CD4-positive, alpha-beta memory T cell (primary cell): ENCODE measurements at regions of chr11 and their contacts with region 1.

Region 1: GRCh38 chr11:48055292-48056132 is 75.2 kb downstream of the PTPRJ start:
- DNase-seq: peak; percentile 77 to 84 (median 81)
- H3K4me3 ChIP-seq: peak overlapping the region; percentile 33 to 40
- H3K4me3 Mint-ChIP-seq: peak overlapping the region; percentile 71 to 88 (median 83)
- H3K27ac ChIP-seq: peak overlapping the region; percentile 31
- H3K27ac Mint-ChIP-seq: peak overlapping the region; percentile 79 to 96 (median 91)
- H3K4me1 ChIP-seq: peaks cover 89% of the 10 kb centered on the region
- H3K4me1 Mint-ChIP-seq: peaks cover 60 to 93% (median 75%) of the 10 kb centered on the region in 4 donors
- H3K27me3 ChIP-seq: no peaks in the 10 kb centered on the region
- H3K27me3 Mint-ChIP-seq: no peaks in the 10 kb centered on the region

Region 2: GRCh38 chr11:47750725-47751124 is 304.8 kb before region 1 on chr11:
- CTCF ChIA-PET with region 1: no interaction called
- POLR2A ChIA-PET with region 1: no interaction called
- intact Hi-C with region 1: no loop called
- DNase-seq: no peak
- H3K4me3 ChIP-seq: no peak overlapping the region
- H3K4me3 Mint-ChIP-seq: no peak overlapping the region
- H3K27ac ChIP-seq: no peak overlapping the region
- H3K27ac Mint-ChIP-seq: peak overlapping the region in 1 of 7 donors; percentile 32
- H3K4me1 ChIP-seq: no peaks in the 10 kb centered on the region
- H3K4me1 Mint-ChIP-seq: peaks cover 6 to 17% (median 11%) of the 10 kb centered on the region in 4 donors
- H3K27me3 ChIP-seq: no peaks in the 10 kb centered on the region
- H3K27me3 Mint-ChIP-seq: no peaks in the 10 kb centered on the region

Region 3: GRCh38 chr11:47837292-47837691 is 218.2 kb before region 1 on chr11:
- CTCF ChIA-PET with region 1: no interaction called
- POLR2A ChIA-PET with region 1: no interaction called
- intact Hi-C with region 1: no loop called
- DNase-seq: no peak
- H3K4me3 ChIP-seq: no peak overlapping the region
- H3K4me3 Mint-ChIP-seq: no peak overlapping the region
- H3K27ac ChIP-seq: no peak overlapping the region
- H3K27ac Mint-ChIP-seq: peak overlapping the region in 1 of 7 donors; percentile 5
- H3K4me1 ChIP-seq: no peaks in the 10 kb centered on the region
- H3K4me1 Mint-ChIP-seq: peaks cover 0 to 19% (median 7%) of the 10 kb centered on the region in 4 donors
- H3K27me3 ChIP-seq: no peaks in the 10 kb centered on the region
- H3K27me3 Mint-ChIP-seq: no peaks in the 10 kb centered on the region

Region 4: DNA sequence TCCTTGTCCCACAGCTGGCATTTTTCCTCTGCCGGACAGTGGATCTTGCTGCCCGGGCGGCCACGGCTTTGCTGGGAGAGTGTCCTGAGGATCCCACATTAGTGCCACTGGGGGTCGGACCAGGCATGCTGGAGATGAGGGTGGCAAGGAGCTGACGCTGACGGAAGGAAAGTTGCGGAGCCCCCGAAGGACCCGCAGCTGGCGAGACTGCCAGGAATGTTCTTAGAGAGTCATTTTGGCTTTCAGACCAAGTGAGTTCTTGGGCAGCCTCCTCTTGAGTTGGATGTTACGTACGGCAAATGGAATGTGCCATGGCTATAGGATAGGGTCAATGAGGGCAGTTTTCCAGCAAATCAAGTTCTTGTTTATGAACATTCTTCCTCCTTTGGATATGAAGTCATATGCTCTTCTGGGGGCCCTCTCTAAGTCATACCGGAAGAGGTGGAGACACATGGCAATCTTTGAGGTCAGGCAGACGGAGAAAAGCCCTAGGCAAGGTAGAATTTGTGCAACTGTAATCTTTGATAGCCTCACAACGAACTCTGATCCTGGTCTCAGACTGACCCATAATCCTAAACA is 149.9 kb before region 1 on chr11:
- CTCF ChIA-PET with region 1: no interaction called
- POLR2A ChIA-PET with region 1: no interaction called
- intact Hi-C with region 1: no loop called
- DNase-seq: no peak
- H3K4me3 ChIP-seq: no peak overlapping the region
- H3K4me3 Mint-ChIP-seq: peak overlapping the region in 3 of 8 donors; percentile 59 to 66 (median 65)
- H3K27ac ChIP-seq: no peak overlapping the region
- H3K27ac Mint-ChIP-seq: peak overlapping the region in 1 of 7 donors; percentile 7
- H3K4me1 ChIP-seq: no peaks in the 10 kb centered on the region
- H3K4me1 Mint-ChIP-seq: peaks cover 4 to 15% (median 7%) of the 10 kb centered on the region in 4 donors
- H3K27me3 ChIP-seq: no peaks in the 10 kb centered on the region
- H3K27me3 Mint-ChIP-seq: no peaks in the 10 kb centered on the region

Region 5: GRCh38 chr11:47980245-47981049 is 75.1 kb before region 1 on chr11 and contains the start of gene PTPRJ:
- CTCF ChIA-PET with region 1: interaction called, 4 read pairs
- POLR2A ChIA-PET with region 1: interaction called, 8 read pairs
- intact Hi-C with region 1: loop called (anchors 2 kb)
- DNase-seq: peak; percentile 68 to 76 (median 72)
- H3K4me3 ChIP-seq: peak within 1 kb of the TSS in 1 of 2 donors; percentile 56
- H3K4me3 Mint-ChIP-seq: peak within 1 kb of the TSS; percentile 70 to 97 (median 93)
- H3K27ac ChIP-seq: peak within 1 kb of the TSS; percentile 53
- H3K27ac Mint-ChIP-seq: peak within 1 kb of the TSS; percentile 32 to 95 (median 53)
- H3K4me1 ChIP-seq: peaks cover 44% of the 10 kb centered on the region
- H3K4me1 Mint-ChIP-seq: peaks cover 28 to 40% (median 31%) of the 10 kb centered on the region in 4 donors
- H3K27me3 ChIP-seq: no peaks in the 10 kb centered on the region
- H3K27me3 Mint-ChIP-seq: no peaks in the 10 kb centered on the region
- total RNA-seq, gene PTPRJ: 57.8 to 57.9 TPM

Region 6: DNA sequence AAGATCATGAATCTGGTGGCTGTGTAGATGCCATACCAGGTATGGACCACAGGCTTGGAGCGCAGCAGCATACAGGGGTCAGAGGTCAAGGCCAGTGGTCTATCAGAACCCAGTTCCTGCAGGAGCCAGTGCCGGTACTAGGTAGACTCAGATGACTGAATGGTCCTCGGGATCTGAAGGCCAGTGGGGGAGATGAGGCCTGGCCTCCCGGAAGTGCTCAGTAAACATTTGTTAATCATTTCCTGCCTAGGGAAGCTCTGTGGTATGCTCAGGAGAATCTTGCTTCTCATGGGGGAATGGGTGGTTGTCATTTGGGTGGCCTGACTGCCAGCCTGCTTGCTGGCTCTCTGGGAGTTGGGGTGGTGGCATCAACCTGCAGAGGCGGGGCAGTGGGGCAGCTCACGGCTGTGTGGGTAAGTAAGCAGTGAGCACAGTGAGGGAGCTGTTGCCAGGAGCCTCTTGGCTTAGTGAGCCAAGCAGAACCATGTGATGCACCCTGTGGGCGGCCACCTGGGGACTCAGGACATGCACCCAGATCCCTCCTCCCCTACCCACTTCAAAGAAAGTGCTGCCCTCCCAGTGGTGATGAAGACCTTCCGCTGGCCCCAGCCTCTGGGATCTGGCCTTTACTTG is 42.1 kb before region 1 on chr11:
- CTCF ChIA-PET with region 1: interaction called, 15 read pairs
- POLR2A ChIA-PET with region 1: interaction called, 184 read pairs
- intact Hi-C with region 1: loop called (anchors 1 kb)
- DNase-seq: peak; percentile 47 to 83 (median 54)
- H3K4me3 ChIP-seq: peak overlapping the region in 1 of 2 donors; percentile 44
- H3K4me3 Mint-ChIP-seq: peak overlapping the region in 7 of 8 donors; percentile 67 to 83 (median 77)
- H3K27ac ChIP-seq: peak overlapping the region; percentile 76
- H3K27ac Mint-ChIP-seq: peak overlapping the region; percentile 84 to 98 (median 97)
- H3K4me1 ChIP-seq: peaks cover 93% of the 10 kb centered on the region
- H3K4me1 Mint-ChIP-seq: peaks cover 66 to 91% (median 83%) of the 10 kb centered on the region in 4 donors
- H3K27me3 ChIP-seq: no peaks in the 10 kb centered on the region
- H3K27me3 Mint-ChIP-seq: no peaks in the 10 kb centered on the region

Region 7: GRCh38 chr11:48028914-48029680 is 26.4 kb before region 1 on chr11:
- CTCF ChIA-PET with region 1: interaction called, 11 read pairs
- POLR2A ChIA-PET with region 1: interaction called, 22 read pairs
- intact Hi-C with region 1: no loop called
- DNase-seq: peak in 3 of 5 donors; percentile 39 to 60 (median 44)
- H3K4me3 ChIP-seq: no peak overlapping the region
- H3K4me3 Mint-ChIP-seq: peak overlapping the region in 6 of 8 donors; percentile 34 to 69 (median 45)
- H3K27ac ChIP-seq: no peak overlapping the region
- H3K27ac Mint-ChIP-seq: peak overlapping the region; percentile 19 to 92 (median 90)
- H3K4me1 ChIP-seq: peaks cover 40% of the 10 kb centered on the region
- H3K4me1 Mint-ChIP-seq: peaks cover 38 to 72% (median 53%) of the 10 kb centered on the region in 4 donors
- H3K27me3 ChIP-seq: no peaks in the 10 kb centered on the region
- H3K27me3 Mint-ChIP-seq: no peaks in the 10 kb centered on the region

Region 8: DNA sequence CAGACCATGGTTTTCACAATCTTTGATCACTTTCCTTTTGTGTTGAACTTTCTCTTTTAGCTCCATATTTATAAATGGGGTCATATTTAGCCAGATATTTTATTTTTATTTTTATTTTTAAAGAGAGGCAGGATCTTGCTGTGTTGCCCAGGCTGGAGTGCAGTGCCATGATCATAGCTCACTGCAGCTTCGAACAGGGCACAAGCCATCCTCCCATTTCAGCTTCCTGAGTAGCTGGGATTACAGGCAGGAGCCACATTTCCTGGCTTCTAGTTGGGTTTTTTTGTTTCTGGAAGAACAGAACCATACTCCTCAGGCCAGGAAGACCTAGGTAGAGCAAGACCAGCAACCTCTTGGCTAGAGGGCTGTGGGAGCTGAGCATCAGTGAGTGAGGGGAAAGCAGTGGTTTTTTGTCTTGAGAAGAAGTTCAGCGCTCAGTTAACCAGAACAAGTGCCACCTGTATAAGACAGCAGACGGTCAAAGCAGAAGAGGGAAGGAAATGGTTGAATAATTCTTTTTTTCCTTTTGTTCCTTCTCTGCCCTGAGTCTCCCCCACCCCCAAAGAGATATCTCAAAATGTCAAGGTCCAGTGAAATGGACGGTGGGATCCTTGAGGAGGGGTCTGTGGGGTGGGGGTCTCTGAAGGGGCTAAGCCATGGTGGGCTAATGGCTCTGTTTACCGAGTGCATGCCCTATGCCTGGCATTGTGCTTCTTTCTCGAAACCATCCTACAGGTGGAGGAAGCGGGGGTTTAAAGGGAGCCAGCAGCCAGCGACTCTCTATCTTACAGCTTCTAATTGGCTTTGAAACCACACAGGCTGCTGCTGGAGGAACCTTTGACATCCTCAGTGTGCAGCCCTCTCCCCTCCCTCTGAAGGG is 12.2 kb before region 1 on chr11:
- CTCF ChIA-PET with region 1: interaction called, 5 read pairs
- POLR2A ChIA-PET with region 1: interaction called, 22 read pairs
- intact Hi-C with region 1: no loop called
- DNase-seq: no peak
- H3K4me3 ChIP-seq: no peak overlapping the region
- H3K4me3 Mint-ChIP-seq: peak overlapping the region in 7 of 8 donors; percentile 26 to 68 (median 51)
- H3K27ac ChIP-seq: no peak overlapping the region
- H3K27ac Mint-ChIP-seq: peak overlapping the region in 6 of 7 donors; percentile 43 to 83 (median 64)
- H3K4me1 ChIP-seq: peaks cover 45% of the 10 kb centered on the region
- H3K4me1 Mint-ChIP-seq: peaks cover 46 to 69% (median 56%) of the 10 kb centered on the region in 4 donors
- H3K27me3 ChIP-seq: no peaks in the 10 kb centered on the region
- H3K27me3 Mint-ChIP-seq: no peaks in the 10 kb centered on the region